K562 (cell line): ENCODE measurements at regions of chr5 and their contacts with region 1.

Region 1: GRCh38 chr5:126972062-126972895 is 58.1 kb downstream of the MARCHF3 start:
- DNase-seq: peak; percentile 53 to 70 (median 60)
- ATAC-seq: peak; percentile 53
- H3K4me3 ChIP-seq: no peak overlapping the region
- H3K27ac ChIP-seq: peak overlapping the region; percentile 79
- H3K4me1 ChIP-seq: peaks cover 38 to 75% of the 10 kb centered on the region in 2 experiments
- H3K27me3 ChIP-seq: no peaks in the 10 kb centered on the region
- CTCF ChIP-seq: no peak
- EP300 ChIP-seq: peak; percentile 94
- POLR2A ChIP-seq: no peak; the same call in 1 of the 2 replicates
- RAD21 ChIP-seq: no peak; a peak in 2 of 4 replicates

Region 2: DNA sequence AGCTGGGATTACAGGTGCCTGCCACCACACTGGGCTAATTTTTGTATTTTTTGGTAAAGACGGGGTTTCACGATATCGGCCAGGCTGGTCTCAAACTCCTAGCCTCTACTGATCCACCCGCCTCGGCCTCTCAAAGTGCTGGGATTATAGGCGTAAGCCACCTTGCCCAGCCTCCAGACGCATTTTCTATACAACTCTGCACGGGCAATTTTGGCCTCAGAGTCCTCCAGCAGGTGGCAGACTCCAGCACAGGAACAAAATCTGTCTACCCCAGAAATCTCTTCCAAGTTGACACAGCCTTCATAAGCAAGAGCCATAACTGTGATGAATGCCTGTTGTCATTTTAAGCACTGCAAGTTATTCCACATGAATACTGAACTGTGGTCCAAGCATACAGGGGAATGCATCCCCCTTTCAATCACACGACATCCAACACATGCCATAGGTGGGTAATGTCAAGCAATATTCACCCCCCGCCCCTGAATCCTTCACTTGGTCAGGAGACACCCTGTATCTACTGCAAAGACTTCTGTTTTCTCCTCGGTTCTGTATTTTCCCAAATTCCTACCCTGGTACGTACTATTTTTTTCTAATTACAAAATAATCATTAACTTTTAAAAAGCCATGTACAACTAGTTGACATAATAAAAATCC is 428.1 kb before region 1 on chr5:
- CTCF ChIA-PET with region 1: no interaction called
- POLR2A ChIA-PET with region 1: no interaction called
- in situ Hi-C with region 1: no loop called
- intact Hi-C with region 1: no loop called
- DNase-seq: peak; percentile 37 to 74 (median 48)
- ATAC-seq: peak; percentile 90
- H3K4me3 ChIP-seq: no peak overlapping the region
- H3K27ac ChIP-seq: no peak overlapping the region
- H3K4me1 ChIP-seq: no peaks in the 10 kb centered on the region
- H3K27me3 ChIP-seq: peaks cover 5 to 19% of the 10 kb centered on the region in 2 experiments; a peak in 4 of 5 replicates
- CTCF ChIP-seq: peak; percentile 65 to 76 (median 73)
- EP300 ChIP-seq: no peak
- POLR2A ChIP-seq: no peak
- RAD21 ChIP-seq: peak; percentile 55 to 72

Region 3: DNA sequence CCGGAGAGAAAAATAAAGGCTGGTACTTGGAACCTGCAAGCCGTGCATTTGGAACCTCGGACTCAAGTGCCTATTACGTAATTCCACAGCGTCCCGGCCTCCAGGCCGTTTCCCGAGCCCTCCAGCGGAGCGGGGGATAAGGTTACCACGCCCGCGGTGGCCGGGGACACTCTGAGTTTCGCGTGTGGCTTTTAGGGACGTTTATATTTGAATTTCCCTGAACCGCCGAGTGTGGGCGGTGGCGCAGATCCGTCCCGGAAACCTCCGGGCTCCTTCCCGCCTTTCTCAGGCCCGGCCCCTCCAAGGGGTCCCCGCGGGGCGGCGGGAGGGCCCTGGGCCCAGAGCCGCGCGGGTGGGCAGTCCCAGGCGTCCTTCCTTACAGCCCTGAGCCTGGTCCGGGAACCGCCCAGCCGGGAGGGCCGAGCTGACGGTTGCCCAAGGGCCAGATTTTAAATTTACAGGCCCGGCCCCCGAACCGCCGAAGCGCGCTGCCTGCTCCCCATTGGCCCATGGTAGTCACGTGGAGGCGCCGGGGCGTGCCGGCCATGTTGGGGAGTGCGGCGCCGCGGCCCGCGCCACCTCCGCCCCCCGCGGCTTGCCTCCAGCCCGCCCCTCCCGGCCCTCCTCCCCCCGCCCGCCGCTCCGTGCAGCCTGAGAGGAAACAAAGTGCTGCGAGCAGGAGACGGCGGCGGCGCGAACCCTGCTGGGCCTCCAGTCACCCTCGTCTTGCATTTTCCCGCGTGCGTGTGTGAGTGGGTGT is 195.6 kb before region 1 on chr5 and contains the start of gene LMNB1:
- CTCF ChIA-PET with region 1: no interaction called
- POLR2A ChIA-PET with region 1: no interaction called
- in situ Hi-C with region 1: no loop called
- intact Hi-C with region 1: loop called (anchors 5 kb)
- DNase-seq: peak; percentile 94 to 97 (median 94)
- ATAC-seq: peak; percentile 83
- H3K4me3 ChIP-seq: peak within 1 kb of the TSS; percentile 93
- H3K27ac ChIP-seq: peak within 1 kb of the TSS; percentile 98
- H3K4me1 ChIP-seq: peaks cover 3 to 19% of the 10 kb centered on the region in 2 experiments; a peak in 4 of 5 replicates
- H3K27me3 ChIP-seq: no peaks in the 10 kb centered on the region
- CTCF ChIP-seq: no peak
- EP300 ChIP-seq: peak; percentile 57
- POLR2A ChIP-seq: peak; percentile 73
- RAD21 ChIP-seq: peak in 1 of 2 experiments; percentile 18; a peak in 3 of 4 replicates
- polyA plus RNA-seq, gene LMNB1: 2.8 to 7.6 TPM

Region 4: GRCh38 chr5:126846344-126846743 is 125.9 kb before region 1 on chr5:
- CTCF ChIA-PET with region 1: no interaction called
- POLR2A ChIA-PET with region 1: interaction called, 3 read pairs
- in situ Hi-C with region 1: no loop called
- intact Hi-C with region 1: loop called (anchors 5 kb)
- DNase-seq: peak in 1 of 4 experiments; percentile 30
- ATAC-seq: peak; percentile 56
- H3K4me3 ChIP-seq: no peak overlapping the region
- H3K27ac ChIP-seq: no peak overlapping the region
- H3K4me1 ChIP-seq: peaks cover 13 to 31% of the 10 kb centered on the region in 2 experiments; a peak in 4 of 5 replicates
- H3K27me3 ChIP-seq: no peaks in the 10 kb centered on the region
- CTCF ChIP-seq: peak; percentile 29 to 45 (median 38); a peak in 4 of 6 replicates
- EP300 ChIP-seq: no peak
- POLR2A ChIP-seq: no peak
- RAD21 ChIP-seq: peak; percentile 43 to 57

Region 5: GRCh38 chr5:126884269-126884819 is 87.9 kb before region 1 on chr5:
- CTCF ChIA-PET with region 1: no interaction called
- POLR2A ChIA-PET with region 1: interaction called, 5 read pairs
- in situ Hi-C with region 1: no loop called
- intact Hi-C with region 1: loop called (anchors 2 kb)
- DNase-seq: peak; percentile 49 to 95 (median 72)
- ATAC-seq: peak; percentile 92
- H3K4me3 ChIP-seq: no peak overlapping the region
- H3K27ac ChIP-seq: peak overlapping the region; percentile 74
- H3K4me1 ChIP-seq: peaks cover 8 to 53% of the 10 kb centered on the region in 2 experiments
- H3K27me3 ChIP-seq: no peaks in the 10 kb centered on the region
- CTCF ChIP-seq: no peak
- EP300 ChIP-seq: peak; percentile 100
- POLR2A ChIP-seq: 0 out of 2 replicates have a peak, but pooled peaks have one; percentile 25
- RAD21 ChIP-seq: peak; percentile 4 to 35

Region 6: GRCh38 chr5:126998201-126998631 is 25.9 kb after region 1 on chr5:
- CTCF ChIA-PET with region 1: no interaction called
- POLR2A ChIA-PET with region 1: interaction called, 15 read pairs
- in situ Hi-C with region 1: no loop called
- intact Hi-C with region 1: no loop called
- DNase-seq: peak in 3 of 4 experiments; percentile 32 to 82 (median 66)
- ATAC-seq: peak; percentile 90
- H3K4me3 ChIP-seq: no peak overlapping the region; the same call in 1 of the 2 replicates
- H3K27ac ChIP-seq: peak overlapping the region; percentile 86
- H3K4me1 ChIP-seq: peaks cover 7 to 64% of the 10 kb centered on the region in 2 experiments
- H3K27me3 ChIP-seq: no peaks in the 10 kb centered on the region
- CTCF ChIP-seq: peak in 1 of 3 experiments; percentile 29; a peak in 2 of 6 replicates
- EP300 ChIP-seq: peak; percentile 77
- POLR2A ChIP-seq: no peak
- RAD21 ChIP-seq: peak; percentile 23 to 48; a peak in 3 of 4 replicates

Region 7: GRCh38 chr5:127040796-127041520 is 68.7 kb after region 1 on chr5:
- CTCF ChIA-PET with region 1: no interaction called
- POLR2A ChIA-PET with region 1: no interaction called
- in situ Hi-C with region 1: no loop called
- intact Hi-C with region 1: no loop called
- DNase-seq: peak in 2 of 4 experiments; percentile 26 to 39
- ATAC-seq: peak; percentile 73
- H3K4me3 ChIP-seq: no peak overlapping the region
- H3K27ac ChIP-seq: no peak overlapping the region
- H3K4me1 ChIP-seq: peaks cover 0 to 10% of the 10 kb centered on the region in 2 experiments; a peak in 2 of 5 replicates
- H3K27me3 ChIP-seq: no peaks in the 10 kb centered on the region
- CTCF ChIP-seq: no peak
- EP300 ChIP-seq: no peak
- POLR2A ChIP-seq: no peak
- RAD21 ChIP-seq: no peak

Region 8: DNA sequence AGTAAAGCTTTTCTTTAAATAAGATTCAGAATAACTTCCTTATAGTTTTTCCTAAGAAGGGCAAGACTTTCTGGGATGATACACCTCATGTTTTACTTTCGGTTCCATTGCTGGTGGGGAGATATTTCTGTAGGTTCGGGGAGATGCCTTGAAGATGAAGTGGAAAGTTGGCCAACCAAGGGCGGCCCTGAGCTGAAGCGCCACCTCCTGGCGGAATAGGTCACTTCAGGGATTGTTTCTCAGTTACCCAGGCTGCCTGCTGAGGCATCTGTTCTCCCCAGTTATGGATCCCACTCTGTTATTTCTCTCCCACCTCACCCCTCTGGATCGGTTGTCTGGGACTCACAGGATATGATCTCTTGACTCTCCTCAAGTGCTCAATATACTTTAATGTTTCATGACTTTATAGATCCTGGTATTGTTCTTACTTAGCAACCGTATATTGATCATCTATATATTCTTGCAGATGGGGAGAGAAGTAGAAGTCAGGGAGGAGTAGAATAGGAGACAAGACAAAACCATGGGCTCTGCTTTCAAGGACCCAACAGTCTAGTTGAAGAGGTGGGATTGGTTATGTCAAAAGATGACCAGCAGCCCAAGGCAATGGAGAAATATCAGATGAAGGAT is 341.7 kb after region 1 on chr5:
- CTCF ChIA-PET with region 1: no interaction called
- POLR2A ChIA-PET with region 1: no interaction called
- in situ Hi-C with region 1: no loop called
- intact Hi-C with region 1: loop called (anchors 10 kb)
- DNase-seq: peak; percentile 70 to 72 (median 71)
- ATAC-seq: peak; percentile 96
- H3K4me3 ChIP-seq: no peak overlapping the region
- H3K27ac ChIP-seq: no peak overlapping the region
- H3K4me1 ChIP-seq: no peaks in the 10 kb centered on the region
- H3K27me3 ChIP-seq: 0 out of 5 replicates have a peak, but pooled peaks cover 0 to 4% of the 10 kb centered on the region in 2 experiments
- CTCF ChIP-seq: peak; percentile 78 to 88 (median 79)
- EP300 ChIP-seq: no peak
- POLR2A ChIP-seq: no peak
- RAD21 ChIP-seq: peak; percentile 65 to 75